ENCODE measurements at regions of chr7 and their contacts with region 1.

Region 1: GRCh38 chr7:105013221-105013815 is 687 bp upstream of the KMT2E start:
- DNase-seq: peak; percentile 91 to 97 (median 94)
- ATAC-seq: peak; percentile 56
- H3K4me3 ChIP-seq: peak overlapping the region; percentile 97 to 99
- H3K4me3 Mint-ChIP-seq: peak overlapping the region; percentile 99
- H3K27ac ChIP-seq: peak overlapping the region; percentile 99
- H3K27ac Mint-ChIP-seq: peak overlapping the region; percentile 100
- H3K4me1 ChIP-seq: peaks cover 42% of the 10 kb centered on the region
- H3K4me1 Mint-ChIP-seq: peaks cover 46% of the 10 kb centered on the region
- H3K27me3 ChIP-seq: no peaks in the 10 kb centered on the region
- H3K27me3 Mint-ChIP-seq: no peaks in the 10 kb centered on the region
- CTCF ChIP-seq: peak; percentile 52

Region 2: DNA sequence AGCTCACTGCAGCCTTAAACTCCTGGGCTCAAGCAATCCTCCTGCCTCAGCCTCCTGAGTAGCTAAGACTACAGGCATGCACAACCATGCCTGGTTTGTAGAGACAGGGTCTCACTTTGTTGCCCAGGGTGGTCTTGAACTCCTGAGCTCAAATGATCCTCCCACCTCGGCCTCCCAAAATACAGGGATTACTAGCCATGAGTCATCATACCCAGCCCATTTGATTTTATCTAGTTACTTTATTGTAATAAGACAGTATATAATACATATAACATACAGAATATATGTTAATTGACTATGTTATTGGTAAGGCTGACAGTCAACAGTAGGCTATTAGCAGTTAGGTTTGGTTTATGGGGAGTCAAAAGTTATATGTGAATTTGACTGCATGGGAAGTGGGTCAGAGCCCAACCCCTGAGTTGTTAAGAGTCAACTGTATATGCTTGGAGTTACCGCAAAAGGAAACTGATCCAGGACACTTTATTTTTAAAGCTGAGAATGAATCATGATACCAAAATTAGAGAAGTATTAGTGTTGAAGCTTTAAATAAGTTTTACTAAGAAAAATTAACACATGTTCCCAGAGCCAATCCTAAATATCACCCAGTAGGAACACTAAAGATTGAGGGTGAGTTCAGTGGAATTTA is 20.0 kb before region 1 on chr7:
- CTCF ChIA-PET with region 1: interaction called, 4 read pairs
- POLR2A ChIA-PET with region 1: interaction called, 15 read pairs
- intact Hi-C with region 1: no loop called
- DNase-seq: no peak
- ATAC-seq: no peak
- H3K4me3 ChIP-seq: no peak overlapping the region
- H3K4me3 Mint-ChIP-seq: no peak overlapping the region
- H3K27ac ChIP-seq: no peak overlapping the region
- H3K27ac Mint-ChIP-seq: peak overlapping the region; percentile 81
- H3K4me1 ChIP-seq: peaks cover 33% of the 10 kb centered on the region
- H3K4me1 Mint-ChIP-seq: peaks cover 72% of the 10 kb centered on the region
- H3K27me3 ChIP-seq: no peaks in the 10 kb centered on the region
- H3K27me3 Mint-ChIP-seq: no peaks in the 10 kb centered on the region
- CTCF ChIP-seq: no peak

Region 3: DNA sequence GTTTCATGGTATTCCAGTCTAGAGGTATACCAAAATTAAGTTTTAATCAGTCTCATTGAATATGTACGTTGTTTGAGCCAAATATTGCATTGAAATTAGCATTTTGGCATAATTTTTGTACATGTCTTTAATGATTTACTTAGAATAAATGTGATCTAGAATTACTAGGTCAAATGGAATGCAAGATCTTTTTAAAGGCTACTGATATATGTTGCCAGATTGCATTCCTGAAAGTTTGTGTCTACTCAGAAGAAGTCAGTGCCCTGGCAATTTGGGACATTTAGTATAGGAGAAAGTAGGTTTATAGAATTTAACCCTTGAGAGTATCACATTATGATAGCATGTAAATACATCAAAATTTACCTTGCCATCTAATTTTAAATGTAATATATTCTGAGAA is 33.1 kb after region 1 on chr7:
- CTCF ChIA-PET with region 1: interaction called, 6 read pairs
- POLR2A ChIA-PET with region 1: interaction called, 7 read pairs
- intact Hi-C with region 1: loop called (anchors 1 to 2 kb)
- DNase-seq: no peak
- ATAC-seq: no peak
- H3K4me3 ChIP-seq: no peak overlapping the region
- H3K4me3 Mint-ChIP-seq: no peak overlapping the region
- H3K27ac ChIP-seq: no peak overlapping the region
- H3K27ac Mint-ChIP-seq: no peak overlapping the region
- H3K4me1 ChIP-seq: peaks cover 5% of the 10 kb centered on the region
- H3K4me1 Mint-ChIP-seq: peaks cover 67% of the 10 kb centered on the region
- H3K27me3 ChIP-seq: no peaks in the 10 kb centered on the region
- H3K27me3 Mint-ChIP-seq: no peaks in the 10 kb centered on the region
- CTCF ChIP-seq: no peak

Region 4: GRCh38 chr7:105522062-105522936 is 509.0 kb after region 1 on chr7 and contains the start of gene PUS7:
- CTCF ChIA-PET with region 1: no interaction called
- POLR2A ChIA-PET with region 1: no interaction called
- intact Hi-C with region 1: loop called in 1 of 2 experiments (anchors 2 kb)
- DNase-seq: peak; percentile 60 to 91 (median 79)
- ATAC-seq: peak; percentile 95
- H3K4me3 ChIP-seq: peak within 1 kb of the TSS; percentile 44 to 59
- H3K4me3 Mint-ChIP-seq: peak within 1 kb of the TSS; percentile 96
- H3K27ac ChIP-seq: peak within 1 kb of the TSS; percentile 65 to 70
- H3K27ac Mint-ChIP-seq: peak within 1 kb of the TSS; percentile 91
- H3K4me1 ChIP-seq: peaks cover 11% of the 10 kb centered on the region
- H3K4me1 Mint-ChIP-seq: peaks cover 14% of the 10 kb centered on the region
- H3K27me3 ChIP-seq: no peaks in the 10 kb centered on the region
- H3K27me3 Mint-ChIP-seq: no peaks in the 10 kb centered on the region
- CTCF ChIP-seq: no peak
- total RNA-seq, gene PUS7: 2.0 to 2.6 TPM

Measured in CD8-positive, alpha-beta T cell (primary cell).